ENCODE measurements at regions of chr16 and their contacts with region 1.

Region 1: GRCh38 chr16:85615852-85616606 is 2.9 kb downstream of the GSE1 start:
- DNase-seq: peak; percentile 71 to 79
- H3K4me3 ChIP-seq: no peak overlapping the region; the same call in 1 of the 2 replicates
- H3K4me3 Mint-ChIP-seq: peak overlapping the region; percentile 81
- H3K27ac Mint-ChIP-seq: peak overlapping the region; percentile 85
- H3K4me1 ChIP-seq: peaks cover 21% of the 10 kb centered on the region
- H3K4me1 Mint-ChIP-seq: peaks cover 26% of the 10 kb centered on the region
- H3K27me3 ChIP-seq: no peaks in the 10 kb centered on the region
- H3K27me3 Mint-ChIP-seq: no peaks in the 10 kb centered on the region
- CTCF ChIP-seq: peak; percentile 88 to 90

Region 2: GRCh38 chr16:85628645-85629044 is 12.6 kb after region 1 on chr16:
- CTCF ChIA-PET with region 1: interaction called, 14 read pairs
- POLR2A ChIA-PET with region 1: interaction called, 3 read pairs
- intact Hi-C with region 1: no loop called
- DNase-seq: peak in 1 of 2 experiments; percentile 58
- H3K4me3 ChIP-seq: no peak overlapping the region
- H3K4me3 Mint-ChIP-seq: no peak overlapping the region
- H3K27ac Mint-ChIP-seq: peak overlapping the region; percentile 66
- H3K4me1 ChIP-seq: peaks cover 10% of the 10 kb centered on the region; the same call in 1 of the 2 replicates
- H3K4me1 Mint-ChIP-seq: peaks cover 14% of the 10 kb centered on the region
- H3K27me3 ChIP-seq: no peaks in the 10 kb centered on the region
- H3K27me3 Mint-ChIP-seq: no peaks in the 10 kb centered on the region
- CTCF ChIP-seq: peak; percentile 19 to 58

Measured in Caco-2 (cell line).